PC-3 (cell line): ENCODE measurements at regions of chrX and their contacts with region 1.

Region 1: GRCh38 chrX:41084044-41084892 is 977 bp upstream of the USP9X start:
- DNase-seq: peak; percentile 91
- ATAC-seq: peak; percentile 65
- H3K4me3 ChIP-seq: peak overlapping the region; percentile 94
- H3K27ac ChIP-seq: peak overlapping the region; percentile 98
- H3K4me1 ChIP-seq: peaks cover 19% of the 10 kb centered on the region
- H3K27me3 ChIP-seq: no peaks in the 10 kb centered on the region
- CTCF ChIP-seq: no peak

Region 2: DNA sequence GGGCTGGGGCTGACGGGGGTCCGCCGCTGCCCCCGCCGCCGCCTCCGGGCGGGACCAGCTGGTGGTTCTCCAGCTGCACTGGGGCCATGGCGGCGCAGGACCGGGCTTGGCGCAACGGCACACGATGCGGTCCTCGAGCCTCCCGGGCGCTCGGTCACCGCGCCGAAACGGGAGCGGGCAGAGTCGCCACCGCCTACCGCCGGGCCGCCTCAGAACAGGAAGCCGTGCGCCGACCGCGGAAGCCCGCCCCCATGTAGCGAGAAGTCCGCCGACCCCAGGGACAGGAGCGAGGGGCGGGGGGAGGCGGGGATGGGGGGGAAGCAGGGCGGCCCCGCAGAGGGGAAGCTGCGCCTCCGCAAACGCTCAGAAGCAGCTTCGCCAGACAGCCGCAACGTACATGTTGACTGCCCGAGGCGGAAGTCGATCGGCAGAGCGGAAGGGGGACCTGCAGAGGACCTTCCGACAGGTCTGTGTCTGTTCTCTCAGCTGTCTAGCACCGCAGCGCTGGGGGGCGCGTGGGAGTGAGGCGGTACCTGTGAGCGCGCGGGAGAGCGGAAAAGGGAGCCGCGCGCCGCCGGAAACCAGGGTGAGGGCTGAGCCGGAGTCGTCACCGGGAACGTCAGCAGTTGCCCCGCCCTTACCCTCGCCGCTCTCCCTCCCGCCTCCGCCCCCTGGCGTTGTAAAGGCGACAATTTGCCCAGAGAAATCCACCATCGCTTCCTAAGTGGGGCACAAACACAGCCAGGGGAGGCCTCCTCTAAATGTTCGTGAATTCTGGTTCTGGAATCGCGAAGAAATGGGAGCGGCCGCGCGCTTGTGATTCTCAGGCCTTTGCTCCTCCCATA is 348.7 kb before region 1 on chrX and contains the start of gene MED14:
- CTCF ChIA-PET with region 1: no interaction called
- POLR2A ChIA-PET with region 1: no interaction called
- intact Hi-C with region 1: loop called (anchors 10 kb)
- DNase-seq: peak; percentile 84
- ATAC-seq: peak; percentile 78
- H3K4me3 ChIP-seq: peak within 1 kb of the TSS; percentile 92
- H3K27ac ChIP-seq: peak within 1 kb of the TSS; percentile 91
- H3K4me1 ChIP-seq: peaks cover 25% of the 10 kb centered on the region
- H3K27me3 ChIP-seq: no peaks in the 10 kb centered on the region
- CTCF ChIP-seq: peak; percentile 49; the same call in 1 of the 2 replicates
- total RNA-seq, gene MED14: 29.5 and 44.7 TPM in 2 replicates

Region 3: DNA sequence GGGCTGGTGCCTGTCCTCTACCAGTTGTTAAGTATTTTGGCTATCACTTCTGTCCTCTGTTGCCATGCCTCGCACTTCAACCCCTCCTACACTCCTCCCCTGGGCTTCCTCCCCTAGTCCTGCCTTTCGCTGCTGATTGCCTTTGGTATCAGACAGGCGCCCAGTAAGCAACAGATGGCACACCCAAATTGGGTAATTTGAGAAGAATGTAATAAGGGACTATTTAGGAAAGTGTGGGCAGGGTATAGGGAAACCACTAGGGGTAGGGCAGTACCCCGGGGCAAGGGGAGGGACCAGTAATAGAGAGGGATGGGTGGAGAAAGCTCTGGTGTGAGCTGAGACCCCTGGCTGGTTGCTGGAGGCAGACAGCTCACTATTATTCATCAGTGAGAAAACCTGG is 171.7 kb before region 1 on chrX:
- CTCF ChIA-PET with region 1: no interaction called
- POLR2A ChIA-PET with region 1: interaction called, 16 read pairs
- intact Hi-C with region 1: no loop called
- DNase-seq: peak; percentile 82
- ATAC-seq: peak; percentile 70
- H3K4me3 ChIP-seq: no peak overlapping the region
- H3K27ac ChIP-seq: peak overlapping the region; percentile 90
- H3K4me1 ChIP-seq: peaks cover 42% of the 10 kb centered on the region
- H3K27me3 ChIP-seq: no peaks in the 10 kb centered on the region
- CTCF ChIP-seq: no peak

Region 4: DNA sequence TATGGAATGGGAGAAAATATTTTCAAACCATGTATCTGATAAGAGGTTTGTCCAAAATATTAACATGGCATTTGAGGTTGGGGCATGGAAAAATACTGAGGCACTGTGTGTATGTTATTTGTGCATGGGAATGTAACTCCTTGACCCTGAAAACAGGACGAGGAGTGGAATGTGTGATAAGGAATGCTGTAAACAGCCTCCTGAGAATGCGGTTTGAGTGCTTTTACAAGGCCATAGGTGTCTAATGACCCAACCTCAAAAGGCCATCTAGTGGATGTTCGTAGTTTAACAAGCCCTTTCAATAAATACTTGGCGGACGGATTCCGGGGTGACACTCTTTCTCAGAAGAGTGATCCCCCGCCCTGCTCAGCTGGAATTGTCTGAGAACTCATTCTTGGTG is 162.0 kb before region 1 on chrX:
- CTCF ChIA-PET with region 1: no interaction called
- POLR2A ChIA-PET with region 1: no interaction called
- intact Hi-C with region 1: loop called (anchors 1 kb)
- DNase-seq: peak; percentile 81
- ATAC-seq: peak; percentile 55
- H3K4me3 ChIP-seq: peak overlapping the region; percentile 35; the same call in 1 of the 2 replicates
- H3K27ac ChIP-seq: no peak overlapping the region
- H3K4me1 ChIP-seq: peaks cover 15% of the 10 kb centered on the region
- H3K27me3 ChIP-seq: no peaks in the 10 kb centered on the region
- CTCF ChIP-seq: peak; percentile 68

Region 5: GRCh38 chrX:41010188-41010846 is 74.0 kb before region 1 on chrX:
- CTCF ChIA-PET with region 1: no interaction called
- POLR2A ChIA-PET with region 1: interaction called, 3 read pairs
- intact Hi-C with region 1: loop called (anchors 1 kb)
- DNase-seq: peak; percentile 91
- ATAC-seq: peak; percentile 80
- H3K4me3 ChIP-seq: peak overlapping the region; percentile 52
- H3K27ac ChIP-seq: peak overlapping the region; percentile 94
- H3K4me1 ChIP-seq: peaks cover 21% of the 10 kb centered on the region
- H3K27me3 ChIP-seq: no peaks in the 10 kb centered on the region
- CTCF ChIP-seq: no peak

Region 6: DNA sequence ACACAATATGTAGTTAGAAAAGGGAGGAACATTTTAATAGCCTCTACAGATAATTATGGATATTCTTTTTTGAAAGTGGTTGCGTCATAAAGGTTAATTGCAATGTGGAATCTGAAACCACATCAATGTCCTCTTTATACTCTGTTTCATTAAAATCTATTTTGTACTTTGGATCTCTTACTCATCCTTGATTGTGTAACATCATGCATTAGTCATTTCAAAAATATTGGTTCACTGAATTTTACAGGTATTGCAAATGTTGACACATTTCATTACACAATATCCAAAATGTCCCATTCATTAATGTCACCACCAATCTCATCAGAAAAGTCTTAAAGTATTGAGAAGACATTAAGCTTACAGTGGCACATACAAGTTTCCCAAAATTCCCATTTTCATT is 61.7 kb before region 1 on chrX:
- CTCF ChIA-PET with region 1: no interaction called
- POLR2A ChIA-PET with region 1: no interaction called
- intact Hi-C with region 1: loop called (anchors 1 kb)
- DNase-seq: peak; percentile 90
- ATAC-seq: peak; percentile 78
- H3K4me3 ChIP-seq: no peak overlapping the region
- H3K27ac ChIP-seq: peak overlapping the region; percentile 73
- H3K4me1 ChIP-seq: peaks cover 15% of the 10 kb centered on the region
- H3K27me3 ChIP-seq: no peaks in the 10 kb centered on the region
- CTCF ChIP-seq: no peak

Region 7: GRCh38 chrX:41116948-41117347 is 32.7 kb after region 1 on chrX:
- CTCF ChIA-PET with region 1: no interaction called
- POLR2A ChIA-PET with region 1: no interaction called
- intact Hi-C with region 1: loop called (anchors 2 kb)
- DNase-seq: peak; percentile 4
- ATAC-seq: 0 out of 2 replicates have a peak, but pooled peaks have one; percentile 33
- H3K4me3 ChIP-seq: no peak overlapping the region
- H3K27ac ChIP-seq: no peak overlapping the region
- H3K4me1 ChIP-seq: peaks cover 24% of the 10 kb centered on the region
- H3K27me3 ChIP-seq: no peaks in the 10 kb centered on the region
- CTCF ChIP-seq: no peak

Region 8: DNA sequence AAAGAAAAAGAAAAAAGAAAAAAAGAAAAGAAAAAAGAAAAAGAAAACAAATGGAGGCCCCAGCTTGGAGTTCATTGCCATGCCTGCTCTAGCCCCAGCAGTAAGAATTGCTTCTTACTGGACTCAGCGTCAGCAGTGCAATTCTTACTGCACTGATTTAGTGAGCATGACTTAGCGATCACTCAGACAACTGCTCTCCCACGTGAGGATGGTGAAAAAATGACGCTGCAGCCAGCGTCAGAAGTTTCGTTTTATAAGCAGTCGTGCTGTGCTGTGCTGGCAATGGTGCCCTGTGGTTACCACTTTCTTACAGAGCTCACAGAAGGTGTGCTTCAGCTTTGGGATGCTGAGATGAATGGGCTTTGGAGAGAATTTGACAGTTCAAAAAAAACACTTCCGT is 181.3 kb after region 1 on chrX:
- CTCF ChIA-PET with region 1: no interaction called
- POLR2A ChIA-PET with region 1: no interaction called
- intact Hi-C with region 1: no loop called
- DNase-seq: no peak
- ATAC-seq: no peak
- H3K4me3 ChIP-seq: no peak overlapping the region
- H3K27ac ChIP-seq: no peak overlapping the region
- H3K4me1 ChIP-seq: no peaks in the 10 kb centered on the region
- H3K27me3 ChIP-seq: no peaks in the 10 kb centered on the region
- CTCF ChIP-seq: no peak